Gastrocnemius medialis (tissue), 4 donors: ENCODE measurements at regions of chr3 and their contacts with region 1.

Region 1: GRCh38 chr3:23183734-23184133 is 19.4 kb upstream of the UBE2E2 start:
- DNase-seq: peak in 1 of 2 donors; percentile 27
- ATAC-seq: peak; percentile 76 to 81
- H3K4me3 ChIP-seq: no peak overlapping the region
- H3K27ac ChIP-seq: no peak overlapping the region
- H3K4me1 ChIP-seq: no peaks in the 10 kb centered on the region
- H3K27me3 ChIP-seq: no peaks in the 10 kb centered on the region
- CTCF ChIP-seq: peak; percentile 33 to 57 (median 41)
- POLR2A ChIP-seq: no peak

Region 2: GRCh38 chr3:23776352-23776891 is 592.7 kb after region 1 on chr3:
- in situ Hi-C with region 1: loop called in 1 of 4 experiments (anchors 25 kb)
- intact Hi-C with region 1: no loop called
- DNase-seq: peak in 1 of 2 donors; percentile 6
- ATAC-seq: peak; percentile 88 to 97
- H3K4me3 ChIP-seq: no peak overlapping the region
- H3K27ac ChIP-seq: peak overlapping the region; percentile 47 to 69 (median 62)
- H3K4me1 ChIP-seq: peaks cover 7 to 13% of the 10 kb centered on the region in 2 donors
- H3K27me3 ChIP-seq: no peaks in the 10 kb centered on the region
- CTCF ChIP-seq: no peak
- POLR2A ChIP-seq: no peak